Activated CD4-positive, alpha-beta T cell treated with anti-CD3 and anti-CD28 coated beads, Interleukin-2, amount 10 ng/mL, durations not matched to agents 24 days and 14 days (primary cell): ENCODE measurements at regions of chr15 and their contacts with region 1.

Region 1: DNA sequence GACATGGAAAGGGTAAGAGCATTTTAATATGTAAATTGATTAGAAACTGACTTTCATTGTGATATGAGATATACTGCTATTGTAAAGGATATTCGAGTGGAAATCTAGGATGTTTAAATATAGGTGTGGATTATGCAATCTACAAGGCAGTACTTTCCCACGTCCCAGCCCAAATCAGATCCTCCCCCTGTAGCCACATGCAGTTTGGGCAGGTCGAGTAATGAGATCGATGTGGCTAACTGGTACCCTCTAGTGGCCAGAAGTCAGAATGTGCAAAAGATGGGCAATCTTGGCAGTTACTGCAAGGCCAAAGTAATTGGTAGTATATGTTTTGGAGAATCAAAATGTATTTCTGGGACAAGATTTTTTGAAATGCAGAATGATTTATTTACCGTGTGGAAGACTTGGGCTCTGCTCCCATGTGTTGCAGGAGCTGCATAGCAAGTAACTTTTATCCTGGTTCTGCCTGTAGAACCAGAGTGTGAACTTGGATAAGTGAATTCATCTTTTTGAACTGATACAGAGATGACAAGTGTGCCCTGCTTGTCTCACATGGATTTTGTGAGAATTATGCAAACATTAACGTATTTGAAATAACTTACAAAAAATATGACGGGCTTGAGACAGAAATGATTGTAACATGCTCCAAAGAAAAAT is 94.5 kb upstream of the ADAMTSL3 start:
- DNase-seq: peak; percentile 85
- H3K4me3 Mint-ChIP-seq: no peak overlapping the region
- H3K27ac Mint-ChIP-seq: no peak overlapping the region
- H3K4me1 Mint-ChIP-seq: no peaks in the 10 kb centered on the region
- H3K27me3 Mint-ChIP-seq: peaks cover 3% of the 10 kb centered on the region

Region 2: GRCh38 chr15:83436458-83437158 is 122.8 kb before region 1 on chr15:
- intact Hi-C with region 1: loop called (anchors 1 kb)
- DNase-seq: peak; percentile 49
- H3K4me3 Mint-ChIP-seq: no peak overlapping the region
- H3K27ac Mint-ChIP-seq: no peak overlapping the region
- H3K4me1 Mint-ChIP-seq: peaks cover 4% of the 10 kb centered on the region
- H3K27me3 Mint-ChIP-seq: peaks cover 9% of the 10 kb centered on the region

Region 3: DNA sequence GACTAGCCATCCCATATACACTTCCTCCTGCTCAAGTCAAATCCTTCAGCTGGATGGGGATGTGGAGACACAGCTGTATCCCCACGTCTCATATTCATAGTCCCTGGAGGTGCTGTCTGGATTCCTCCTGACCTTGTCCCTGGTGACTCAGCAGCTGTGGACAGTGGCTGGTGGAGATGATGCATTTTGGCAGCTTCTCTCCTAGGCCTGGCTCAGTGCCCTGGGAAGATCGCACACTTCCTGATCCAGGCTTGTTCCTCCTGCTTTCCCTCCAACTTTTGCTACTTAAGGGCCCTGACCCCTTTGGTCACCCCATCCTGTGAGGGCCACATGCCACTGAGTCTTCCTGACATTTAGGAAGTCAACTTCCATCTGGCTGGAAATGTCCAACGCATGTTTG is 138.9 kb after region 1 on chr15:
- intact Hi-C with region 1: no loop called
- DNase-seq: peak; percentile 22
- H3K4me3 Mint-ChIP-seq: no peak overlapping the region
- H3K27ac Mint-ChIP-seq: no peak overlapping the region
- H3K4me1 Mint-ChIP-seq: no peaks in the 10 kb centered on the region
- H3K27me3 Mint-ChIP-seq: no peaks in the 10 kb centered on the region